CD8-positive, alpha-beta T cell (primary cell): ENCODE measurements at regions of chr4 and their contacts with region 1.

Region 1: DNA sequence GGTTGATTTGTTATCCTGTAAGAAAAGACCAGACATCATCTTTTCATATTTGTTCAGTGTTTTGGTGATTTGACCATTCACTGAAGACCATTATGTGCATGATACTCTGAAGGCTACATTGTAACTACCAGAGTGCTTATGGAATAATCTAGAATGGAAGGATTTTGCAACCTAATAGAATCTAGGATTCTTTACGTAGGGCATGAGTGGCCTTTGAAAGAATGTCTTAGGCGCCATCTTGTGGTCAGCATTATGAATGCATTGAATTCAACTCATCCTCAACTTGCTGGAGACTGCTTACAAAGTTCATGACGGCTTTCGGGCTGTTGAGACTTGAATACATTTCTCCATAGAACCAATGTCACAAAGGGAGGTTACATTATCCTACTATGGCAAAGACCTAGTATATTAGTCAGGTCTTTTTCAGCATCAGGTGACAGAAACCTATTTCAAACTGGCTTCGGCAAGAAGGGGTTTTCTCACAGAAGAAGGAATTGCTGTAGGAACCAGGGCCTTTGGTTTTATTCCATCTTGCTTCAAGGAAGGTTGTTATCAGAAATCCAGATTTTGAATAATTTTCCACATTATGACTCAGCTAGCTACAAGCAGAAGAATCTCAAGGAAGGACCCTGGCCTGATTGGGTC is 104.1 kb downstream of the GPAT3 start:
- DNase-seq: peak in 8 of 9 experiments; percentile 25 to 78 (median 57)
- ATAC-seq: peak; percentile 75
- H3K4me3 ChIP-seq: no peak overlapping the region
- H3K4me3 Mint-ChIP-seq: no peak overlapping the region
- H3K27ac ChIP-seq: no peak overlapping the region
- H3K27ac Mint-ChIP-seq: no peak overlapping the region
- H3K4me1 ChIP-seq: no peaks in the 10 kb centered on the region
- H3K4me1 Mint-ChIP-seq: peaks cover 2% of the 10 kb centered on the region
- H3K27me3 ChIP-seq: no peaks in the 10 kb centered on the region
- H3K27me3 Mint-ChIP-seq: peaks cover 7% of the 10 kb centered on the region
- CTCF ChIP-seq: peak; percentile 76

Region 2: GRCh38 chr4:83362492-83363329 is 277.3 kb before region 1 on chr4:
- CTCF ChIA-PET with region 1: no interaction called
- POLR2A ChIA-PET with region 1: no interaction called
- intact Hi-C with region 1: loop called in 1 of 2 experiments (anchors 5 kb)
- DNase-seq: peak in 2 of 9 experiments; percentile 7 to 26
- ATAC-seq: no peak
- H3K4me3 ChIP-seq: no peak overlapping the region
- H3K4me3 Mint-ChIP-seq: no peak overlapping the region
- H3K27ac ChIP-seq: no peak overlapping the region
- H3K27ac Mint-ChIP-seq: no peak overlapping the region
- H3K4me1 ChIP-seq: no peaks in the 10 kb centered on the region
- H3K4me1 Mint-ChIP-seq: no peaks in the 10 kb centered on the region
- H3K27me3 ChIP-seq: no peaks in the 10 kb centered on the region
- H3K27me3 Mint-ChIP-seq: peaks cover 2% of the 10 kb centered on the region
- CTCF ChIP-seq: no peak

Region 3: GRCh38 chr4:83503974-83504373 is 136.0 kb before region 1 on chr4:
- CTCF ChIA-PET with region 1: interaction called, 27 read pairs
- POLR2A ChIA-PET with region 1: interaction called, 3 read pairs
- intact Hi-C with region 1: loop called (anchors 1 kb)
- DNase-seq: peak in 3 of 9 experiments; percentile 19 to 46 (median 30)
- ATAC-seq: peak; percentile 65
- H3K4me3 ChIP-seq: no peak overlapping the region
- H3K4me3 Mint-ChIP-seq: no peak overlapping the region
- H3K27ac ChIP-seq: peak overlapping the region in 1 of 2 experiments; percentile 21
- H3K27ac Mint-ChIP-seq: peak overlapping the region; percentile 72
- H3K4me1 ChIP-seq: peaks cover 13% of the 10 kb centered on the region
- H3K4me1 Mint-ChIP-seq: peaks cover 15% of the 10 kb centered on the region
- H3K27me3 ChIP-seq: no peaks in the 10 kb centered on the region
- H3K27me3 Mint-ChIP-seq: peaks cover 2% of the 10 kb centered on the region
- CTCF ChIP-seq: no peak

Region 4: GRCh38 chr4:83651502-83652245 is 11.7 kb after region 1 on chr4:
- CTCF ChIA-PET with region 1: interaction called, 38 read pairs
- POLR2A ChIA-PET with region 1: no interaction called
- intact Hi-C with region 1: no loop called
- DNase-seq: no peak
- ATAC-seq: no peak
- H3K4me3 ChIP-seq: no peak overlapping the region
- H3K4me3 Mint-ChIP-seq: no peak overlapping the region
- H3K27ac ChIP-seq: no peak overlapping the region
- H3K27ac Mint-ChIP-seq: no peak overlapping the region
- H3K4me1 ChIP-seq: no peaks in the 10 kb centered on the region
- H3K4me1 Mint-ChIP-seq: no peaks in the 10 kb centered on the region
- H3K27me3 ChIP-seq: no peaks in the 10 kb centered on the region
- H3K27me3 Mint-ChIP-seq: peaks cover 8% of the 10 kb centered on the region
- CTCF ChIP-seq: no peak

Region 5: DNA sequence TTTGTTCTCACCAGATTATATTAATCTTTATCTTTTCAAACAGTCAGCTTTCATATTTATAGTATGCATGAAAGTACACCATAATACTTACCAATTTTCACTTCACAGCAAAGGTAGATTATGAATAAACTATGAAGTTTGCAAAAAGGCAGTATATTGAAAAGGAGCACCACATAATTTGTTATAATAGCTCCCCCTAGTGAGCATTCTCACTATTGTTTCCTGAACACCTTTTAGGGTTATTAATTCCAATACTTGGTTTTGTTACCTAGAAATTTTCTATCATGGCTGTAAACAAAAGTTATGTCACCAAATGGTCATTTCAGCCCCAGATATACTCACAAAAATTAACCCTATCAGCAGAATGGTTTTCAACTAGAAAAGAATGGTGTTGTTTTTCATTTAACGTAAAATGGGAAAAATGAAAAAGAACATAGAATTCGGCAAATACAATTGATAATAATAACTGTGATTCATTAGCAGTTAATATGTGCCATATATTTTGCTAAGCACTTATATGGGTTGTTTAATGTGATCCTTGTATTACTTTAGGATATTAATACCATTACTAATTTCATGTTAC is 889.3 kb after region 1 on chr4:
- CTCF ChIA-PET with region 1: interaction called, 20 read pairs
- POLR2A ChIA-PET with region 1: no interaction called
- intact Hi-C with region 1: loop called in 1 of 2 experiments (anchors 2 kb)
- DNase-seq: peak in 2 of 9 experiments; percentile 8 to 31
- ATAC-seq: no peak
- H3K4me3 ChIP-seq: no peak overlapping the region
- H3K4me3 Mint-ChIP-seq: no peak overlapping the region
- H3K27ac ChIP-seq: no peak overlapping the region
- H3K27ac Mint-ChIP-seq: no peak overlapping the region
- H3K4me1 ChIP-seq: no peaks in the 10 kb centered on the region
- H3K4me1 Mint-ChIP-seq: no peaks in the 10 kb centered on the region
- H3K27me3 ChIP-seq: no peaks in the 10 kb centered on the region
- H3K27me3 Mint-ChIP-seq: peaks cover 27% of the 10 kb centered on the region
- CTCF ChIP-seq: peak; percentile 69